Posterior vena cava (tissue), 2 donors: ENCODE measurements at regions of chr2 and their contacts with region 1.

Region 1: DNA sequence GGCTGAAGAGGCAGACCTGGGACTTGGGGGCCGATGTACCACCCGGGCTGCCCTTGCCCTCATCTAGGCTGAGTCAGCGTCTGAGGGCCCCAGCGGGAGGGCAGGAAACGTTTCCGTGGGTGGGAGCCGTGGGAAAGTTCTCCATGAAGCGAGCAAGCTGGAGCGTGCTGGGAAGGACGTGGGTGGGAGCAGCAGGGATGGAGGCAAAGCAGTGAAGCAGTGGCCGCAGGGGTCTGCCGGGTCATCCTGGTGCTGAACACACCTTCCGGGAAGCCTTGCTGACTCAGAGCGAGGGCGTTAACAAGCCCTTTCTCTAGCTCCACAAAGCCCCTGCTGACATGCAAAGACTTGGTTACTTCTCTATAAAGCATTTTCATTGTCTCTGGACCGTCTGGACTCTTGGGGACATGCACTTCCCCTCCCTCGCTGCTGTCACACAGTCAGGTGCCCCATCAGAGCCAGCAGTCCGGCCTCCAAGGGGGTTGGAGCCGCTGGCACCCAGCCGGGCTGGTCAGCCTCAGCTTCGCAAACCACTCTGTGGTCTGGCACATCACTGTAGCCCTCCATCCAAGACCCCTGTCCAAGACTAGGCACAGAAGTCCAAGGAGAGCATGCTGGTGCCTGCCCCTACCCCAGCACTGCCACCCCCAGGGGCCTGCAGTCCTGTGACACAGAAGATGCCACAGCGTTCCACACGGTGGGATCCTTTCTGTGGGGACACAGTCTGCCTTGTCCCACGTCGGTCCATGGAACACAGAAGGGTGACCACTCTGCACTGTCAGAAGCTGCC is 115.1 kb upstream of the GPC1 start:
- DNase-seq: peak; percentile 68

Region 2: GRCh38 chr2:240277073-240277806 is 43.2 kb before region 1 on chr2:
- intact Hi-C with region 1: no loop called
- DNase-seq: no peak

Region 3: DNA sequence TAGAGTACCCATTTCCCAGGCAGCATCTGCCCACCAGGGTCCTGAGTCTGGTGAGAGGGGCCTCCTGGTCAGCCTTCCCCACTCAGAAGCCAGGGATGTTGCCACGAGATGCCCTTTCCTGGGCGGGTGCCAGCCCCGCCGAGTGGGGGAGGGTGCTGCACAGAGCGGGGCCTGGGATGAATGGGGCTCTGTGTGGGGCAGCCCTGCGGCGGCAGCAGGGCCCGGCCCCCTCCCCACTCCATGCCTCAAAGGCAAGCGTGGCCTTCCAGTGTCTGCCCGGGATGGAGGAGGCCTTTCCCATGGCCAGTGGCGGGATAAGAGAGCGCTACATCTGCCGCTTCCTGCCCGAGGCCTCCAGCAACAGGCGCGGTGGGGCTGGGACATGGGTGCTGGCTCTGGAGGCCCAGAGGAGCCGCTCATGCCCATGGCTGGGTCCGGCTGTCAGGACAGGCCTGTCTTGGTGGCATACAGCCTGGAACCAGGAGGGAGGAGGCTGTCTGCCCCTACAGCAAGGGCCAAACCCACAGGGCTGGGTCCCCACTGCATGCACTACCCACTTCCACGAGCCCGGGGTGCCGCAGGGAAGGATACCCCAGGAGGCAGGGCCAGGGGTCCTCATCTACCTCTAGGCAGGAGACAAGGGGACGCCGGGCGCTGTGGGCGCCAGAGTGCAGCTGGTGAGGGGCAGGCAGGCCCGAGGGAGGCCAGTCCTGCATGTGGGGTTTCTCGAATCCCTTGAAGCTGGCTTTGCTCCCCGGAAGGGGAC is 19.8 kb after region 1 on chr2:
- intact Hi-C with region 1: loop called in 1 of 2 experiments (anchors 1 kb)
- DNase-seq: peak; percentile 79